ENCODE measurements at regions of chr5 and their contacts with region 1.

Region 1: GRCh38 chr5:150309227-150309885 is 6.7 kb upstream of the ARSI start:
- DNase-seq: no peak
- H3K4me3 ChIP-seq: no peak overlapping the region
- H3K27ac ChIP-seq: no peak overlapping the region
- H3K4me1 ChIP-seq: peaks cover 5% of the 10 kb centered on the region
- H3K27me3 ChIP-seq: no peaks in the 10 kb centered on the region
- CTCF ChIP-seq: no peak

Region 2: DNA sequence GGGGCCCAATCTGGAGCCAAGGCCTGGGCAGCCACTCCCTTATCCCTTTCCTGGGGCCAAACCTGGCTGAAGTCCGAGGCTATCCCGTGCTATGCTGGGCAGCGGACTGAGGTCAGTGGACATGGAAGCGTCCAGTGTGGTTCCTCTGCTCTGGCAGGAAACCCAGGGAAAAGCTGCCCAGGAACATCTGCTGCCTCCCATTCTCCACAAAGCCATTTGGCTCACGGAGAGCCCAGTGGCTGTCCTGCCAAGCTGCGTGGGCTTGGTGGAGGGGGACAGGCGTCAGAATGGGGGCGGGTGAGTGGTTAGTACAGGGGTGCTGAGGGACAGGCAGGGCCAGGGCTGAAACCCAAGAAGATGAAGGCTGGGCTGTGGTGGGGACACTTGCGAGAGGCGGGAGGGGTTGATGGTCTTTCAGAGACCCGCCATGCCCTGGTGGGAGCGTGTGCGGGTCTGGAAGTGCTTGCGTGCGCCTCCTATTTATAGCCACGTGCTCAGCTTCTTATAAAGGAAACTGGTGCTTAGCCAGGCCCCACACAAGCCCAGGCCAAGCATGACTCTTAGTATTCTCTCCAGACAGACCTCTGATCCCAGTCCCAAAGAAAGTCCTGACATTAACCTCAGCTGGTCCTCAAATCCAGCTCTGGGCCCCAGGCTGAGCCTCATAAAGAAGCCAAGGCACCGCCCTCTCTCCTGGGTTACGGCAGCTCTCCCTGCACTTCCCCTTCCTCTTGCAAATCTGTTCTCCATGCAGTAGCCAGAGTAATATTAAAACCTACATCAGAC is 128.9 kb before region 1 on chr5:
- CTCF ChIA-PET with region 1: no interaction called
- POLR2A ChIA-PET with region 1: no interaction called
- intact Hi-C with region 1: no loop called
- DNase-seq: no peak
- H3K4me3 ChIP-seq: no peak overlapping the region
- H3K27ac ChIP-seq: no peak overlapping the region
- H3K4me1 ChIP-seq: no peaks in the 10 kb centered on the region
- H3K27me3 ChIP-seq: no peaks in the 10 kb centered on the region
- CTCF ChIP-seq: no peak

Region 3: DNA sequence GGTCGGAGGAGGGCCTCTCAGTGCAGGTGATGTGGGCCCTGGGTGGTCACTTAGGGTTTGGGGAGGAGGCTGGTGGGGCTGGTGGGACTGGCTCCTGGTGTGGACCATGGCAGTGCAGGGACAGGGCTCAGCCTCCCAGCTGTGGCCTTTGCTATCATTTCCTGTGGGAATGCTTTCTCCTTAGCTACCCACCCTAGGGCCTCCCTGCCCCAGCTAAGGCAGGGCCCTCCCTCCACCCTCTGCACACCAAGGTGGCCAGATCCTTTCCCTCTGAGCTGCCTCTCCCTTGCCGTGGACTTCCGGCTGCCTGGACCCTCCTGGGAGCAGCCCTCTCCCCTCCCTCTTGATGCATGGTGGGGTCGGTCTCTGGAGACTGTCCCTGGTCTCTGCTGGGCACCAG is 16.1 kb after region 1 on chr5:
- CTCF ChIA-PET with region 1: no interaction called
- POLR2A ChIA-PET with region 1: interaction called, 14 read pairs
- intact Hi-C with region 1: no loop called
- DNase-seq: no peak
- H3K4me3 ChIP-seq: no peak overlapping the region
- H3K27ac ChIP-seq: no peak overlapping the region
- H3K4me1 ChIP-seq: peaks cover 30% of the 10 kb centered on the region
- H3K27me3 ChIP-seq: no peaks in the 10 kb centered on the region
- CTCF ChIP-seq: no peak

Measured in PC-9 (cell line).